PC-3 (cell line): ENCODE measurements at regions of chr10 and their contacts with region 1.

Region 1: GRCh38 chr10:34723750-34724149 is 91.3 kb downstream of the PARD3 start:
- DNase-seq: peak; percentile 96
- ATAC-seq: peak; percentile 70
- H3K4me3 ChIP-seq: peak overlapping the region; percentile 38
- H3K27ac ChIP-seq: no peak overlapping the region
- H3K4me1 ChIP-seq: peaks cover 52% of the 10 kb centered on the region
- H3K27me3 ChIP-seq: no peaks in the 10 kb centered on the region
- CTCF ChIP-seq: peak; percentile 99

Region 2: GRCh38 chr10:34689053-34689452 is 34.7 kb before region 1 on chr10:
- CTCF ChIA-PET with region 1: interaction called, 11 read pairs
- POLR2A ChIA-PET with region 1: interaction called, 3 read pairs
- intact Hi-C with region 1: loop called (anchors 1 kb)
- DNase-seq: peak; percentile 66
- ATAC-seq: no peak
- H3K4me3 ChIP-seq: 0 out of 2 replicates have a peak overlapping the region, but pooled peaks have one; percentile 0
- H3K27ac ChIP-seq: no peak overlapping the region
- H3K4me1 ChIP-seq: peaks cover 11% of the 10 kb centered on the region
- H3K27me3 ChIP-seq: no peaks in the 10 kb centered on the region
- CTCF ChIP-seq: no peak

Region 3: GRCh38 chr10:34758447-34758996 is 34.8 kb after region 1 on chr10:
- CTCF ChIA-PET with region 1: interaction called, 8 read pairs
- POLR2A ChIA-PET with region 1: no interaction called
- intact Hi-C with region 1: loop called (anchors 5 kb)
- DNase-seq: peak; percentile 100
- ATAC-seq: peak; percentile 91
- H3K4me3 ChIP-seq: peak overlapping the region; percentile 35
- H3K27ac ChIP-seq: peak overlapping the region; percentile 81
- H3K4me1 ChIP-seq: peaks cover 52% of the 10 kb centered on the region
- H3K27me3 ChIP-seq: no peaks in the 10 kb centered on the region
- CTCF ChIP-seq: no peak

Region 4: GRCh38 chr10:34824870-34825269 is 101.1 kb after region 1 on chr10:
- CTCF ChIA-PET with region 1: interaction called, 11 read pairs
- POLR2A ChIA-PET with region 1: no interaction called
- intact Hi-C with region 1: no loop called
- DNase-seq: peak; percentile 42
- ATAC-seq: peak; percentile 74
- H3K4me3 ChIP-seq: no peak overlapping the region
- H3K27ac ChIP-seq: no peak overlapping the region
- H3K4me1 ChIP-seq: peaks cover 7% of the 10 kb centered on the region
- H3K27me3 ChIP-seq: no peaks in the 10 kb centered on the region
- CTCF ChIP-seq: peak; percentile 74

Region 5: GRCh38 chr10:34906067-34906965 is 182.6 kb after region 1 on chr10:
- CTCF ChIA-PET with region 1: no interaction called
- POLR2A ChIA-PET with region 1: interaction called, 10 read pairs
- intact Hi-C with region 1: no loop called
- DNase-seq: no peak
- ATAC-seq: no peak
- H3K4me3 ChIP-seq: no peak overlapping the region
- H3K27ac ChIP-seq: no peak overlapping the region
- H3K4me1 ChIP-seq: peaks cover 4% of the 10 kb centered on the region; the same call in 1 of the 2 replicates
- H3K27me3 ChIP-seq: no peaks in the 10 kb centered on the region
- CTCF ChIP-seq: no peak

Region 6: GRCh38 chr10:34985823-34986222 is 262.1 kb after region 1 on chr10:
- CTCF ChIA-PET with region 1: interaction called, 11 read pairs
- POLR2A ChIA-PET with region 1: no interaction called
- intact Hi-C with region 1: loop called (anchors 1 kb)
- DNase-seq: peak; percentile 87
- ATAC-seq: peak; percentile 96
- H3K4me3 ChIP-seq: no peak overlapping the region
- H3K27ac ChIP-seq: no peak overlapping the region
- H3K4me1 ChIP-seq: no peaks in the 10 kb centered on the region
- H3K27me3 ChIP-seq: no peaks in the 10 kb centered on the region
- CTCF ChIP-seq: peak; percentile 93